Calu3 (cell line): ENCODE measurements at regions of chr6 and their contacts with region 1.

Region 1: GRCh38 chr6:8085053-8085511 is 17.3 kb downstream of the EEF1E1 start:
- DNase-seq: peak; percentile 71
- H3K4me3 Mint-ChIP-seq: no peak overlapping the region
- H3K27ac Mint-ChIP-seq: peak overlapping the region; percentile 27
- H3K4me1 Mint-ChIP-seq: peaks cover 39% of the 10 kb centered on the region
- H3K27me3 Mint-ChIP-seq: no peaks in the 10 kb centered on the region
- CTCF ChIP-seq: no peak

Region 2: GRCh38 chr6:8063761-8064637 is 21.1 kb before region 1 on chr6 and contains the start of gene BLOC1S5:
- CTCF ChIA-PET with region 1: no interaction called
- intact Hi-C with region 1: loop called (anchors 2 kb)
- DNase-seq: peak; percentile 90
- H3K4me3 Mint-ChIP-seq: peak within 1 kb of the TSS; percentile 89
- H3K27ac Mint-ChIP-seq: peak within 1 kb of the TSS; percentile 56
- H3K4me1 Mint-ChIP-seq: no peaks in the 10 kb centered on the region
- H3K27me3 Mint-ChIP-seq: no peaks in the 10 kb centered on the region
- CTCF ChIP-seq: no peak
- total RNA-seq, gene BLOC1S5: 8.0 and 10.5 TPM in 2 replicates

Region 3: GRCh38 chr6:8102122-8102958 is 17.3 kb after region 1 on chr6 and contains the start of gene EEF1E1:
- CTCF ChIA-PET with region 1: interaction called, 11 read pairs
- intact Hi-C with region 1: no loop called
- DNase-seq: peak; percentile 86
- H3K4me3 Mint-ChIP-seq: peak within 1 kb of the TSS; percentile 80
- H3K27ac Mint-ChIP-seq: peak within 1 kb of the TSS; percentile 83
- H3K4me1 Mint-ChIP-seq: peaks cover 12% of the 10 kb centered on the region
- H3K27me3 Mint-ChIP-seq: no peaks in the 10 kb centered on the region
- CTCF ChIP-seq: no peak
- total RNA-seq, gene EEF1E1: 38.8 and 41.5 TPM in 2 replicates

Region 4: DNA sequence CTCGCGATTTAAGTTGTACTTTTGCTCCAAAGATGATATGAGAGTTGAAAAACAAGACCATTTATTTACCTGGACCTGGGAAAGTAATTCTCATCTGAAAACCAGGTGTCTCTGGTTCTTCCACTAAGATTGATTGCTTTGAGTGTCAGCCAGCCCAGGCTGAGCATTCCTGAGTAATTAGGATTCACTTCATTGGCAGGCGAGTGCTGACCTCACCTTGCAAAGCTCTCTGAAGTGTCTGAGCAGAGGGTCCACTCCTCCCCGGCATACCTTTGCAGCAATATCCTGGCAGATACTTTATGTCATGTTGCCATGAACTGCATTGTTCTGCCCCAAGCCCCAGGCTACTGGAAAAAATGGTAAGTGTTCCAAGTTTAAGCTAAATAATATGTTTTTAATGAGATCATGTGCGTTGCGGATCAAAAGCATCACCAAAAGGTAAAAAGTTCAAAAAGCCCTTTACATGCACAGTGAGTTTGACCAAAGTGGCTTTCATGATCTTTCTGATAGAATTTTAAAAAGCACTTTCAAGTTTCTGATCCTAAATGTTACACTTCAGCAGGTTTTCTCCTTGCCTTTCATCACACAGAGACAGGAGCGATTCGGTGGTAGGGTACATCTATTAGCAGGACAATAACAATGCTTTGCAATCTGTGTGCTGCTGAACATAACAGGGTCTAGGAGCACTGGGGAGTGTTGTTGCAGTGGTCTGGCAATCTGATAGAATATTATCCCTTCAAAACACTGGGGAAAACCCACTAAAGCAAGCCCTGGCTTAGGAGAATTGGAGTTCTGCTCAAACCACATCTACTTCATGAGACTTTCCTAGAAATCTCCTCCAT is 145.1 kb after region 1 on chr6:
- CTCF ChIA-PET with region 1: no interaction called
- intact Hi-C with region 1: no loop called
- DNase-seq: no peak
- H3K4me3 Mint-ChIP-seq: no peak overlapping the region
- H3K27ac Mint-ChIP-seq: no peak overlapping the region
- H3K4me1 Mint-ChIP-seq: no peaks in the 10 kb centered on the region
- H3K27me3 Mint-ChIP-seq: no peaks in the 10 kb centered on the region
- CTCF ChIP-seq: no peak

Region 5: DNA sequence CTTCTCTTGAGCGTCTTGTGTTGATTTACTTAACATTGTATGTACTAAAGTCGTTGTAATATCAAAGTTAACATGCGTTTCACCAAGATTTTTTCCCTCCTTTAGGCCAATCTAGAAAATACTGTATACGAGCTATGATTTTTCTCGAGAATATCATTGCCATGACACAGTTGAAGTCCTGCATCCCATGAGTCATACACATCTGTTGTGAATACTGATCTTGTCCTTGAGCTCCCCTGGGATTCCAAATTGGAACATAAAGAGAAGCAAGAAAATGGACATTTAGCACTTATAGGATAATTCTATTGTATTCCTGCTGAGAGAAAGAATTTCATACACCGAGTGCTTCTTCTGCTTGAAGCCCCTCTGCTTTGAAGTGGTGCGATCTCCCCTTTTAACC is 240.7 kb after region 1 on chr6:
- CTCF ChIA-PET with region 1: no interaction called
- intact Hi-C with region 1: no loop called
- DNase-seq: no peak
- H3K4me3 Mint-ChIP-seq: no peak overlapping the region
- H3K27ac Mint-ChIP-seq: no peak overlapping the region
- H3K4me1 Mint-ChIP-seq: no peaks in the 10 kb centered on the region
- H3K27me3 Mint-ChIP-seq: no peaks in the 10 kb centered on the region
- CTCF ChIP-seq: no peak